Psoas muscle (tissue), 8 donors: ENCODE measurements at regions of chr7 and their contacts with region 1.

Region 1: DNA sequence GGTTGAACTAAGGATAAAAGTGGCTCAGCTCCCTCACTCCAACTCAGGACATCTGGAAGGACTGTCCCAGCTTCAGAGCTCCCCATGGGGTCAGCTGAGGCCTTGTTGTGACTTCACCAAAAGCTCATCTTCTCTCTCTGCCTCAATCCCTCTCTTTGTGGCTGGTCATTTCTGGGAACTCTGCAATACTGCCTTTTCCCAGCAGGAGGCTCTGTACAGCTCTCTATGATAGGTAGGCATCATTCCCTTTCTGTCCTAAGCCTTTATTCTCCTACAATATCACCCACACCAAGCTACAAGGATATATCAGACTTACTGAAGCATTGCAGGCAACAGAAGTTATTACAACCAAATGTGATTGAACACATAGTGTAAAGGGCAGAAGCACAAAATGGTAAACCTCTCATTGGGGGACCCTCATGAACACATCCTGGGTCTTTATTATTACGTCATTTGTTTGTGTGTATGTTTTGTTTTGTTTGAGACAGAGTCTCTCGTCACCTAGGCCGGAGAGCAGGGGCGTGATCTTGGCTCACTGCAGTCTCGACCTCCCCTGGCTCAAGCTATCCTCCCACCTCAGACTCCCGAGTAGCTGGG is 36.7 kb upstream of the PRPS1L1 start:
- DNase-seq: no peak
- ATAC-seq: no peak
- H3K4me3 ChIP-seq: no peak overlapping the region
- H3K27ac ChIP-seq: no peak overlapping the region
- H3K4me1 ChIP-seq: no peaks in the 10 kb centered on the region
- H3K27me3 ChIP-seq: peaks cover 0 to 2% (median 0%) of the 10 kb centered on the region in 3 donors
- CTCF ChIP-seq: peak; percentile 42

Region 2: DNA sequence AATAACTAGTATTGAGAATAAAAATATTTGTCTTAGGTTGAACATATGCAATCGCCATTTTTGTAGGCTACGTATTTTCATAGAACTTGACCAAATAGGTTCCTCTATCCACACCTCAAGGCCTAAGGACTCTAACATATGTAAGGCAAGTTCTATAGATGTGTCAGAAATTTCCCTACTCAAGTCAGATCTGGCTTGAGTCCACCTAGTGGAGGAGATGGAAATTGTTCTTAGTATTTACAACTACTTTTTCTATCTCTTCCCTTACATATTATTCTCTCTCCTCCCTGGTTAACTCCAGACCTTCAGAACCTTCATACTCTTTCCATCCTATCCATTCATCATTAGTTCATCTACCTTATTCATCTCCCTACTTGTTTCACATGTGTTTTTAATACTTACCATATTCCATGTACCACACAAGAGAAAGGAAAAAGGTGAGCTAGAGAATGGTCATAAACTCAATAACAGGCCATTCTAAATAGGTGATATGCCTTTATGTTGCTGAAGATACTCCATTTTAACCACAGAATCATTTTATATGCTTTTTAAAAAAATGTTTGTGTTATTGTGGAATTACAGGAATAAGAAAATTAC is 256.7 kb after region 1 on chr7:
- intact Hi-C with region 1: loop called in 1 of 2 experiments (anchors 10 kb)
- DNase-seq: no peak
- ATAC-seq: no peak
- H3K4me3 ChIP-seq: no peak overlapping the region
- H3K27ac ChIP-seq: no peak overlapping the region
- H3K4me1 ChIP-seq: peaks cover 5% of the 10 kb centered on the region
- H3K27me3 ChIP-seq: no peaks in the 10 kb centered on the region
- CTCF ChIP-seq: peak; percentile 44

Region 3: DNA sequence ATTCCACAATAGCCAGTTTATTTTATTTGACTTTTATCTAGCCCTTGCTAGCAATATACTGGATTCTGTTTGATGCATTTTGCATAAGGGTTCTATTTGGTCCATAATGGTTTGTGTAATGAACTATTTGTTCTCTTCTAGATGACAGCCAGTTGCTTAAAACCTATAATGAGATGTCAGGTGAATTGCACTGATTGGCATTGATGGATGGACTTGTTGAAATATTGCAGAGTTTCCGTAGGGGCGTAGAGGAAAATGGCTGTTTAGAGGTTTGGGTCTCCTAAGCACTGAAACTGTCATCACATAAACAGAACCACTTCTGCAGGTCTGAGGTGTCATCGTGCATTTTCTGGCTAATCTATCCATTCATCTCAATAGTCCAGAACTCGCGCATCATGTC is 306.3 kb after region 1 on chr7:
- intact Hi-C with region 1: no loop called
- DNase-seq: no peak
- ATAC-seq: no peak
- H3K4me3 ChIP-seq: no peak overlapping the region
- H3K27ac ChIP-seq: no peak overlapping the region
- H3K4me1 ChIP-seq: no peaks in the 10 kb centered on the region
- H3K27me3 ChIP-seq: peaks cover 0 to 2% (median 0%) of the 10 kb centered on the region in 3 donors
- CTCF ChIP-seq: no peak